Heart right ventricle (tissue), 16 donors: ENCODE measurements at regions of chr17 and their contacts with region 1.

Region 1: DNA sequence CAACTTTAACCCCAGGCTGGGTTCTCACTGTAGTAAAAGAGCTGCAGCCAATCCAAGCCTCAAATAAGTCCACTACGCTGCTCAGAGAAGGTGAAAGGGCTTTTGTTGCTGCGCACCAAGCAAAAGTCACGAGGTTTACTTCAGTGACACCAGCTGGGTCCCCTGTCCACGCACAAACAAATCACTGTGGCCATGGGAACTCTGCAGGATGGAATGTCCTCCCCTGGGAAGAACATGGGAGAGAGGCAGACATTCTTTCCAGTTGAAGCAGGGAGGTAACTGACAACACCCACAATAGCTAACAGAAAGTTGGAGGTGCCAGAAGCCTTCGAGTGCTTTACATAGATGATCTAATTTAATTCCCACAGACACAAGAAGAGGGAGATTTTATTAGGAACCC is 181.9 kb downstream of the PMP22 start:
- DNase-seq: peak in 1 of 2 donors; percentile 16
- ATAC-seq: peak in 5 of 8 donors; percentile 23 to 87 (median 57)
- H3K4me3 ChIP-seq: no peak overlapping the region
- H3K27ac ChIP-seq: peak overlapping the region in 5 of 10 donors; percentile 6 to 40 (median 18)
- H3K4me1 ChIP-seq: peaks cover 0 to 10% (median 4%) of the 10 kb centered on the region in 9 donors
- H3K27me3 ChIP-seq: no peaks in the 10 kb centered on the region
- CTCF ChIP-seq: no peak

Region 2: GRCh38 chr17:13415807-13416416 is 1667.3 kb before region 1 on chr17:
- intact Hi-C with region 1: loop called in 1 of 10 experiments (anchors 10 kb)
- DNase-seq: peak; percentile 35 to 72
- ATAC-seq: peak; percentile 64 to 93 (median 82)
- H3K4me3 ChIP-seq: no peak overlapping the region
- H3K27ac ChIP-seq: peak overlapping the region in 8 of 10 donors; percentile 8 to 73 (median 58)
- H3K4me1 ChIP-seq: peaks cover 2 to 28% (median 19%) of the 10 kb centered on the region in 9 donors
- H3K27me3 ChIP-seq: no peaks in the 10 kb centered on the region
- CTCF ChIP-seq: peak in 1 of 9 donors; percentile 19

Region 3: DNA sequence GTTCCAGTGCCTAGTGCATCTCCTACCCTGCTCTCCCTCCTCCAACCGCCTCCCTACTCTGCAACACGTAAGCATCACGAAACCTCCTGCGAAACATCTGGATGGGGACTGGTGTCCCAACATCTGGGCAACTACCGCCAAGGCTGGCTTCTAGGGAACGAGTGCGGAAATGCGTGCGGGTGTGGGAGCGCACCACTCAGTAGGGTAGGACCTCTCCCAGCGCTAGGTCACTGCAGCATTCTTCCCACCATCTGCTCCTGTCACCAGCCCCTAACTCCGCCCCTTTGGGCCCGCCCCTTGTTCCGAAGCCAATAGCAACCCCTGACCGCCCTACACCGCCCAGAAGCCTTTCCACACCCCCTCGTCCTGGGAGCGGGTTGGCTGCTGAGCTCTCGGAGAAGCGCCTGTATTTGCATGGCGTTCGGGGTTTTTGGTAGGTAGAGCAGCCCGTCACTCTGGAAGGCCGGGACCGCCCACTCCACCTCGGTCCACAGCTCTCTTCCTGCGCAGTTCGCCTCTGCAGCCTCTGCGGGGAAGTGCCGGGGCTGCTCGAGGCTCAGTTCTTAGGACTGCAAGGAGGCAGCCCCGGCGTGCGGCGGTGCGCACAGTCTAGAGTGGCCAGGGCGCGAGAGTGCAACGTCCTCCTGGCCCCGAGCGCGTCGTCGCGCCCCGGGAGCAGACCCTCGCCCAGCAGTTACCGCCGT is 782.5 kb before region 1 on chr17 and contains the start of gene HS3ST3B1:
- intact Hi-C with region 1: no loop called
- DNase-seq: peak; percentile 98 to 99
- ATAC-seq: peak; percentile 91 to 97 (median 93)
- H3K4me3 ChIP-seq: peak within 1 kb of the TSS; percentile 46 to 80 (median 66)
- H3K27ac ChIP-seq: peak within 1 kb of the TSS; percentile 31 to 90 (median 74)
- H3K4me1 ChIP-seq: peaks cover 7 to 81% (median 67%) of the 10 kb centered on the region in 9 donors
- H3K27me3 ChIP-seq: peaks cover 7 to 90% (median 80%) of the 10 kb centered on the region in 7 donors
- CTCF ChIP-seq: peak in 2 of 9 donors; percentile 7 to 25
- total RNA-seq, gene HS3ST3B1: 1.1 to 5.9 (median 2.3) TPM

Region 4: GRCh38 chr17:15157051-15157450 is 73.8 kb after region 1 on chr17:
- intact Hi-C with region 1: no loop called
- DNase-seq: no peak
- ATAC-seq: peak in 1 of 8 donors; percentile 48
- H3K4me3 ChIP-seq: no peak overlapping the region
- H3K27ac ChIP-seq: no peak overlapping the region
- H3K4me1 ChIP-seq: peaks cover 0 to 3% (median 0%) of the 10 kb centered on the region in 9 donors
- H3K27me3 ChIP-seq: no peaks in the 10 kb centered on the region
- CTCF ChIP-seq: no peak